Left lung (tissue), 14 donors: ENCODE measurements at regions of chr2 and their contacts with region 1.

Region 1: DNA sequence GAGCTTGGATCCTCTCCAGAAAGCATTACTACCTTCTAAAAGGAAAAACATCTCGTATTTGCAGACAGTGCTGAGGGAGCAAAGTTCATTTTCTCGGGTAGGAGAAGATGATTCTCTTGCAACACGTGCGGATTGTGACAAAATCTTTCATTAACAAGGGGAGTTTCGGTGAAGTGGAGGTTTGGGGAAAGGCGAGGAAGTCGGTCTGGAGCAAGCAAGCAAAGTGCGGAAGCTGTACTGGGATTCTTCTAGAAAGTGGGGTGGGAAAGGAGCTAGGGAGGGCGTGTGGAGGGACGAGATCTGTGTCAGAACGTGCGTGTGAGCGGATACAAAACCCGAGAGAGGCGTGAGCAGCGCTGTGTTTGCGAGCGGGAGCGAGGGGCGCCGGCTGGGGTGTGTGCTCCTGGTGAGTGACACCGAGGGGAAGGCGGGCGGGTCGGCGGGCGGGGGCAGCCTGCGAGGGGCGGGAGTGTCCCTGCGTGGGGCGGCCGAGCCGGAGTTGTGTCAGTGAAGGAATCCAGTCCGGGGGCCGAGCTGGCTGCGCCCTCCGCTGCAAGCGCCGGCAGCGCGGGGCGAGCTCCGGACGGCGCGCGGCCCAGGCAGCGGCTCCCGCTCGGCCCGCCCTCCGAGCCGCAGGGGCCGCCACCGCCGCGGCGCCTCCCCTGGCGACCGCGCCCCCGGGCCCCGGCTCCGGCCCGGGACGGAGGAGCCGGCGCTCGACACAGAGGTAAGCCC is at the start of gene SPATS2L:
- DNase-seq: peak; percentile 73 to 92 (median 84)
- ATAC-seq: peak; percentile 80
- H3K4me3 ChIP-seq: peak within 1 kb of the TSS; percentile 83 to 86
- H3K27ac ChIP-seq: peak within 1 kb of the TSS; percentile 91 to 96
- H3K4me1 ChIP-seq: peaks cover under 1 to 24% of the 10 kb centered on the region in 2 donors
- H3K27me3 ChIP-seq: peaks cover 0 to 10% of the 10 kb centered on the region in 2 donors
- CTCF ChIP-seq: no peak
- polyA plus RNA-seq, gene SPATS2L: 81.2 to 96.7 (median 90.4) TPM

Region 2: GRCh38 chr2:199985625-199986207 is 320.6 kb before region 1 on chr2:
- intact Hi-C with region 1: loop called in 1 of 2 experiments (anchors 10 kb)
- DNase-seq: peak in 2 of 4 donors; percentile 51 to 56
- ATAC-seq: peak; percentile 95
- H3K4me3 ChIP-seq: no peak overlapping the region
- H3K27ac ChIP-seq: no peak overlapping the region
- H3K4me1 ChIP-seq: peaks cover 0 to 3% of the 10 kb centered on the region in 2 donors
- H3K27me3 ChIP-seq: no peaks in the 10 kb centered on the region
- CTCF ChIP-seq: peak; percentile 50 to 57